Activated T-helper 2 cell treated with anti-CD3 and anti-CD28 coated beads, Interferon-gamma antibody, Interleukin-2, Interleukin-4, amounts not matched to agents 10 μg/mL and 5 μg/mL and 100 μg/mL, durations not matched to agents 14 hours and 24 hours and 36 hours (primary cell): ENCODE measurements at regions of chr11 and their contacts with region 1.

Region 1: DNA sequence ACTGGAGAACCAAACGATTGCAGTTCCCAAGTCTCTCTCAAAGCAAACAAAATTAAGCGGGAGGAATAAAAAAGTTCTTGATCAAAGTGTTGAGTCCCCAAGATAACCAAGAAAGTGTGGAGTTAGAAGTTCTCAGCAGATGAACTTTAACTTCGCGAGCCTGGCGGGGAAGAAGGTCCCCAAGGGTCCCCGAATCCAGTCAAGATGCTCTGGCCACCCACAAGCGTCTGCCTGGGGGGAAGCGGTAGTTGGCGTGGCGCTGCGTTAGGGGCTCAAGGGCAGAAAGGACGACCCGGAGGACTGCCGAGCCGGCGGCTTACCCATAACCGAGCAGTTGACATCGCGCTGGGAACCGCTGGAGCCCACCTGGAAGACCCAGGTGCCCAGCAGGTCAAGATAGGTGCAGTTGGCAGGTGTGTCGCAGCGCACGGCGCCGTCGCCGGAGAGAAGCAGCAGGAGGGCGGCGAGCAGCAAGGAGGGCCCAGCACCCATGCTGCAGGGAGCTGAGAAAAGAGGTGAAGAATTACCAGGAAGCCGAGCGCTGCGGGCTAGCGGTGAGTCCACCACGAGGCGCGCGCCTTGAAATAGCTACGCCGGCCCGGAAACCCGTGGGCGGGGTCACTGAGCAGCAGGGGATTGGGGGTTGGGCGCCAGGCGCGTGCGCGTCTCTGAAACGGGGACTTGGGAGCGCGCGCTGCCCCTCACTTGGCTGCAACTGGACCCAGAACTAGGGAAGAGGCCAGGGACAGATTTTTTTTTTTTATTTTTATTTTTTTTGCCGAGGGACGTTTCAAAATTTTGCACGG is at the start of gene CTSC:
- DNase-seq: peak; percentile 91
- H3K4me3 Mint-ChIP-seq: peak within 1 kb of the TSS; percentile 96
- H3K27ac Mint-ChIP-seq: peak within 1 kb of the TSS; percentile 96
- H3K4me1 Mint-ChIP-seq: peaks cover 58% of the 10 kb centered on the region
- H3K27me3 Mint-ChIP-seq: no peaks in the 10 kb centered on the region
- total RNA-seq, gene CTSC: 82.4 and 82.6 TPM in 2 replicates

Region 2: DNA sequence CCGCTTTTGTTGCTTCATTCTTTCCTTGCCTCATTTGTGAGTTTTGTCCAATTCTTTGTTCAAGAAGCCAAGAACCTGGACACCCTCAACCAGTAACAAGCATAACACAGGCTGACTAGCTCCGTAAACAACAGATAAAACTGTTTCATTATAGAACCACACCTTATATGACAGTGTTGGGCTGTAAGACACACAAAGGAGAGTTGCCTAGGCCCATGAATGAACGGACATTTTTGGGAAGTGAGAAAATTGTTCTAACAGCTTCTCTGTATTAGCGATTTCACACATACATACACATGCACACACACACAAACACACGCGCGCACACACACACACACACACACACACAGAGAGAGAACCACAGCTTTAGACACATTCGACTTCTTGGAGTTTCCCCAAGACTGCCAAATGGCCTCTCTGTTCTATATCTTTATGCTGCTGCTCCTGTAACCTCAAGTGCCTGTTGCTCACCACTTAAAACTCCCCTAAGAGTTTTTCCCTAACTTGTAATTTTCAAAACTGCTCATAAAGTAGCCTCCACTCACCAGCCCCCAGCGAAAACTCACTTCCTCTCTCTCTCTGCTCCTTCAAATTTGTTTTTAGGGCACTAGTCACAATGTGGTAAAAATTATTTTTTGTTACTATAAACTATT is 35.8 kb before region 1 on chr11:
- intact Hi-C with region 1: loop called (anchors 1 kb)
- DNase-seq: no peak
- H3K4me3 Mint-ChIP-seq: no peak overlapping the region
- H3K27ac Mint-ChIP-seq: peak overlapping the region; percentile 77
- H3K4me1 Mint-ChIP-seq: peaks cover 37% of the 10 kb centered on the region
- H3K27me3 Mint-ChIP-seq: no peaks in the 10 kb centered on the region

Region 3: GRCh38 chr11:88324562-88325345 is 12.6 kb before region 1 on chr11:
- intact Hi-C with region 1: loop called (anchors 2 kb)
- DNase-seq: no peak
- H3K4me3 Mint-ChIP-seq: peak overlapping the region; percentile 59
- H3K27ac Mint-ChIP-seq: peak overlapping the region; percentile 78
- H3K4me1 Mint-ChIP-seq: peaks cover 78% of the 10 kb centered on the region
- H3K27me3 Mint-ChIP-seq: no peaks in the 10 kb centered on the region

Region 4: GRCh38 chr11:88484873-88485621 is 147.7 kb after region 1 on chr11:
- intact Hi-C with region 1: no loop called
- DNase-seq: no peak
- H3K4me3 Mint-ChIP-seq: no peak overlapping the region
- H3K27ac Mint-ChIP-seq: no peak overlapping the region
- H3K4me1 Mint-ChIP-seq: peaks cover 11% of the 10 kb centered on the region
- H3K27me3 Mint-ChIP-seq: peaks cover 9% of the 10 kb centered on the region

Region 5: GRCh38 chr11:88535916-88536547 is 198.6 kb after region 1 on chr11:
- intact Hi-C with region 1: loop called (anchors 2 kb)
- DNase-seq: no peak
- H3K4me3 Mint-ChIP-seq: no peak overlapping the region
- H3K27ac Mint-ChIP-seq: peak overlapping the region; percentile 16
- H3K4me1 Mint-ChIP-seq: peaks cover 20% of the 10 kb centered on the region
- H3K27me3 Mint-ChIP-seq: peaks cover 5% of the 10 kb centered on the region